ENCODE measurements at regions of chr7 and their contacts with region 1.

Region 1: GRCh38 chr7:140517546-140518369 is 38.5 kb upstream of the MKRN1 start:
- DNase-seq: peak; percentile 89
- ATAC-seq: peak; percentile 97
- H3K4me3 ChIP-seq: no peak overlapping the region
- H3K27ac ChIP-seq: no peak overlapping the region
- H3K4me1 ChIP-seq: 0 out of 2 replicates have a peak, but pooled peaks cover 2% of the 10 kb centered on the region
- H3K27me3 ChIP-seq: no peaks in the 10 kb centered on the region
- CTCF ChIP-seq: peak; percentile 94
- POLR2A ChIP-seq: peak; percentile 49; the same call in 1 of the 2 replicates
- RAD21 ChIP-seq: peak; percentile 98

Region 2: GRCh38 chr7:140593672-140593982 is 75.9 kb after region 1 on chr7:
- CTCF ChIA-PET with region 1: no interaction called
- POLR2A ChIA-PET with region 1: no interaction called
- dilution Hi-C with region 1: no loop called
- in situ Hi-C with region 1: no loop called
- intact Hi-C with region 1: no loop called
- DNase-seq: no peak
- ATAC-seq: no peak
- H3K4me3 ChIP-seq: no peak overlapping the region
- H3K27ac ChIP-seq: no peak overlapping the region
- H3K4me1 ChIP-seq: peaks cover 9% of the 10 kb centered on the region; the same call in 1 of the 2 replicates
- H3K27me3 ChIP-seq: no peaks in the 10 kb centered on the region
- CTCF ChIP-seq: no peak
- POLR2A ChIP-seq: no peak
- RAD21 ChIP-seq: no peak

Region 3: DNA sequence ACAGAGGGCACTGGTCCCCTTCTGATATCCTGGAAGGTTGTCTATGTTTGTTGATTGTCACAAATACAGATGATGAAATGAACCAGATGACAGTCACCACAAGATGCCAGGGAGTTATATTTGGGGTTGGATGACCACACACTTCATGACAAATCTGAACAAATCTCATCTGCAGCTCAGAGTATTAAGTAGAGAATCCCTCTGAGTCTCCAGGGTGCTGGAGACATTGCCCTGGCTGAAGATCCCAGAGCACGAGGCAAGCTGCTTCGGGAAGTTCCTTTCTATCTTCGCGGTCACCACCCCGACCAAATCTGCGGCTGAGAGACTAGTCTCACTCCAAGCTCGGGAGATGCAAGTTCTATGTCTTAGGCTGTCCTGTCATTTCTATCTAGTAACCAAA is 113.8 kb after region 1 on chr7:
- CTCF ChIA-PET with region 1: interaction called, 10 read pairs
- POLR2A ChIA-PET with region 1: no interaction called
- dilution Hi-C with region 1: no loop called
- in situ Hi-C with region 1: no loop called
- intact Hi-C with region 1: no loop called
- DNase-seq: no peak
- ATAC-seq: peak; percentile 9
- H3K4me3 ChIP-seq: no peak overlapping the region
- H3K27ac ChIP-seq: no peak overlapping the region
- H3K4me1 ChIP-seq: peaks cover 12% of the 10 kb centered on the region
- H3K27me3 ChIP-seq: no peaks in the 10 kb centered on the region
- CTCF ChIP-seq: no peak
- POLR2A ChIP-seq: no peak
- RAD21 ChIP-seq: no peak

Region 4: DNA sequence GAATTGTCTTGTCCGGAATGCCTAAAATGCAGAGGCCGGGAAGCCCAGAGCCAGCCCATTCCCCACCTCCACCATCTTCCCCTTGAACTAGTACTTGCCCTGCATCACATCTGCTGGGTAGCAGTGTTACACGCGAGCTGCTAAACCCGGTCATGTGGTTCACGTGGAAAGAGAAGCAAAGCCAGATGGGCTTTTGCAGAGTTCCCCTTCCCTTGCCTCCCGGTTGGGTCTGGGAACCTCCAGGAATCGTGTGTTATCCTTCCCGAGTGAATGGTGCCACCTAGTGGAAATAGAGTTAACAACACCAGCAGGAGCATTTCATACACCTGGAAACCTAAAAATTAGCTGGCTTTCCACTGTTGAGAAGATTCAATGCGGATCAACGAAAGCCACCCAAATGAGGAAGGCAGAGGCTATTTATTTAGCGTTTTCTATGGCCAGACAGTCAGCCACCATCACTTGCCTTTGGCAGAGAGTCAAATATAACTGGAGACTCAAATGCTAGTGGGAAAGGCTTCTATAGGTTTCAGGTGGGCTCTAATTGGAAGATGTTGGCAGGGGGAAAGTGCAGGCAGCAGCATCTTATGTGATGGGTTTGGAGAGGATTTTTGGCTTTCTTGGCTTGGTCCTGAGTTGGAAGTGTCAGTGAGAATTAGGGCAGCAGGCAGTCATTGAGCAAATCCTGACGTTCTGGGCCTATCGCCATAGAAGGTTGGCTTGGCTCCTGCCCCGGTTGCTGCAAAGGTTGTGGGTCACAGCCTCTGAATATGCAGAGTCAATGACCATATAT is 135.8 kb after region 1 on chr7:
- CTCF ChIA-PET with region 1: interaction called, 6 read pairs
- POLR2A ChIA-PET with region 1: no interaction called
- dilution Hi-C with region 1: no loop called
- in situ Hi-C with region 1: loop called (anchors 5 kb)
- intact Hi-C with region 1: loop called (anchors 1 kb)
- DNase-seq: peak; percentile 86
- ATAC-seq: peak; percentile 82
- H3K4me3 ChIP-seq: no peak overlapping the region
- H3K27ac ChIP-seq: no peak overlapping the region
- H3K4me1 ChIP-seq: peaks cover 11% of the 10 kb centered on the region
- H3K27me3 ChIP-seq: no peaks in the 10 kb centered on the region
- CTCF ChIP-seq: peak; percentile 95
- POLR2A ChIP-seq: 0 out of 2 replicates have a peak, but pooled peaks have one; percentile 42
- RAD21 ChIP-seq: peak; percentile 99

Measured in IMR-90 (cell line).